Lower lobe of right lung (tissue), 2 donors: ENCODE measurements at regions of chr18 and their contacts with region 1.

Region 1: GRCh38 chr18:58781627-58782194 is 83.0 kb upstream of the ZNF532 start:
- DNase-seq: peak; percentile 63
- ATAC-seq: peak; percentile 85
- H3K4me3 ChIP-seq: no peak overlapping the region
- H3K27ac ChIP-seq: no peak overlapping the region
- H3K4me1 ChIP-seq: peaks cover 12% of the 10 kb centered on the region
- H3K27me3 ChIP-seq: no peaks in the 10 kb centered on the region
- CTCF ChIP-seq: peak; percentile 84

Region 2: DNA sequence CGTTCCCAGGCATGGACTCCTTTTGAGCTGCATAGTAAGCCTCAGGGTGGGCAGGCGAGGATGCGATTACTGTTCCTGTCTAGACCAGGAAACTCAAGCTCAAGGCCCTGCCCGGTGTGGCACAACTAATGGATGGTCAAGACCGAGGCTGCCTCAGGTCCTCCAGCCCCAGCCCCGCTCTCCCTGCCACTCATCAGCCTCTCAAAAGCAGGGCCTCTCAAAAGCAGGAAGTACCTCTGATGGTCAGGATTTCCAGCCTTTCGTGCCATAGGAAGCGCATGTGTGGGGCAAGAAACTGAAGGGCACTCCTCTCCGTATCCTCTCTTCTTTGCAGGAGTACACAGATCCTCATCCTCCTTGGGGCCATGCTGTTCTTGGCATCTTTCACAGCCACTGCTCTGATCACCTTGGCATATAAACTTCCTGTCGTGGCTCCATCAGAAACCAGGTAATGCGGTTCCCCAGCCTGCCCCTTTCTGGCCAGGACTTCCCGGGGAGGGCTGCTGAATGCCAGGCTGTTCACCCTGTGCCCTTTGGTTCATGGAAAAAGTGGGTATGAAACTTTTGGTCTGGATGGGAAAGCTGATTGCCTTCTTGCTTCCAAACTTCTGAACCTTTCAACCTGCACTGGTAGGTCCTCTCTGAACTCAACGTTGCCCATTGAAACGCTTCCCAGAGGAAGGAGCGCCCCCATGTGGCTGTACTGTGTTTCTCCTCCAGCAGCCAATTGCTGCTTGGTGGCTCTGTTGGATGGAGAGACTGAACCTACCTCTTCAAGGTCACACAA is 275.2 kb after region 1 on chr18:
- intact Hi-C with region 1: loop called (anchors 5 kb)
- DNase-seq: no peak
- ATAC-seq: peak; percentile 48 to 76
- H3K4me3 ChIP-seq: no peak overlapping the region
- H3K27ac ChIP-seq: no peak overlapping the region
- H3K4me1 ChIP-seq: no peaks in the 10 kb centered on the region
- H3K27me3 ChIP-seq: no peaks in the 10 kb centered on the region
- CTCF ChIP-seq: peak; percentile 70